ENCODE measurements at regions of chr21 and their contacts with region 1.

Region 1: DNA sequence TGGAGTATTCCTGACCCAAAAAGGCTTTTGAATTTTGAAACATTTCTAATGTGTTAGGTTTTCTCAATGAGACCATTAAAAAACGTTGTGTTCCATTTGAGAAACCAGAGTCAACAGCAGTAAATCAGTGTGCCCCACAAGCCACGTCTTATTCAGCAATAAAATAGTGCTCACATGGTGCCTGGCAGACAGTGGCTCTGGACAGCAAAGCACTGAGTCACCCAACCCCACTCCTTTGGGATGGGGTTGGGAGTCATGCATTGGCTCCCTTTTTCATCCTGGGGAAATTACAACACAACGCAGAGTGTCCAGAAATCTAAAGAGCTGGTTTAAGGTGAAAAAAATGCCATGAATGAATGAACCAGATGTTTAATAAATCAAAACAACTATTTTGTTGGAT is 46.5 kb downstream of the KCNJ15 start:
- DNase-seq: peak; percentile 90
- ATAC-seq: peak; percentile 98
- H3K4me3 ChIP-seq: no peak overlapping the region
- H3K27ac ChIP-seq: peak overlapping the region; percentile 55
- H3K4me1 ChIP-seq: peaks cover 14% of the 10 kb centered on the region
- H3K27me3 ChIP-seq: no peaks in the 10 kb centered on the region
- CTCF ChIP-seq: no peak

Region 2: GRCh38 chr21:38170280-38170679 is 133.0 kb before region 1 on chr21:
- CTCF ChIA-PET with region 1: no interaction called
- POLR2A ChIA-PET with region 1: no interaction called
- intact Hi-C with region 1: no loop called
- DNase-seq: peak; percentile 66
- ATAC-seq: no peak
- H3K4me3 ChIP-seq: no peak overlapping the region
- H3K27ac ChIP-seq: no peak overlapping the region
- H3K4me1 ChIP-seq: peaks cover 15% of the 10 kb centered on the region
- H3K27me3 ChIP-seq: 0 out of 2 replicates have a peak, but pooled peaks cover 3% of the 10 kb centered on the region
- CTCF ChIP-seq: peak; percentile 72

Region 3: DNA sequence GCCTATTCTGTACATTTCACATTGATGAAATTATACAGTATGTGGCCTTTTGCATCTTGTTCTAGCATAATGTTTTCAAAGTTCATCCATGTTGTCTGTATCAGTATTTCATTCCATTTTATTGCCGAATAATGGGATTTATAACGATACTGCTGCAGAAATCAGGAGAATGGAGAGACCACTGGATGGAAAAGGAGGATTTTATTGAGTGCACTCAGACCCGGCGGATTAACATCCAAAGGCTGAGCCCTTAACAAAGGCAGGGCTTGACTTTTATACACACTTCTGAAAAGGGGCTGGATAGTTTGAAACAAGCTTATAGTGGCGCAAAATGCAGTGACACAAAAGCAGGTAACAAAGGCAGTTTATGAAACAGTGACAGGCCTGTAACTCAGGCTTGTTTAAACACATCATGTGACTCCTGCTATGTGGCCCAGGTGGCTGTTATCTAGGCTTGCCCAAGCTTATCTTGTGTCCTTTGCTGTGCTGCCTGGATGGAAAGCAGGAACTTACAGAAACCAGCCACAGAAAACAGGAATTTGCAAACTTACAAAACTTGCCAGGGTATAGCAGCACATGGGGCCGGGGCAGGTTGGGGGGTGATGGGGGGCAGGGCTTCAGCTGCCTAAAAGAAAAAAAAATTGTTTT is 79.3 kb before region 1 on chr21:
- CTCF ChIA-PET with region 1: no interaction called
- POLR2A ChIA-PET with region 1: no interaction called
- intact Hi-C with region 1: no loop called
- DNase-seq: peak; percentile 22
- ATAC-seq: no peak
- H3K4me3 ChIP-seq: no peak overlapping the region
- H3K27ac ChIP-seq: no peak overlapping the region
- H3K4me1 ChIP-seq: no peaks in the 10 kb centered on the region
- H3K27me3 ChIP-seq: no peaks in the 10 kb centered on the region
- CTCF ChIP-seq: no peak

Region 4: GRCh38 chr21:38323721-38324531 is 20.6 kb after region 1 on chr21:
- CTCF ChIA-PET with region 1: no interaction called
- POLR2A ChIA-PET with region 1: no interaction called
- intact Hi-C with region 1: loop called (anchors 2 kb)
- DNase-seq: peak; percentile 95
- ATAC-seq: peak; percentile 87
- H3K4me3 ChIP-seq: peak overlapping the region; percentile 28; the same call in 1 of the 2 replicates
- H3K27ac ChIP-seq: peak overlapping the region; percentile 99
- H3K4me1 ChIP-seq: peaks cover 28% of the 10 kb centered on the region
- H3K27me3 ChIP-seq: no peaks in the 10 kb centered on the region
- CTCF ChIP-seq: no peak

Region 5: DNA sequence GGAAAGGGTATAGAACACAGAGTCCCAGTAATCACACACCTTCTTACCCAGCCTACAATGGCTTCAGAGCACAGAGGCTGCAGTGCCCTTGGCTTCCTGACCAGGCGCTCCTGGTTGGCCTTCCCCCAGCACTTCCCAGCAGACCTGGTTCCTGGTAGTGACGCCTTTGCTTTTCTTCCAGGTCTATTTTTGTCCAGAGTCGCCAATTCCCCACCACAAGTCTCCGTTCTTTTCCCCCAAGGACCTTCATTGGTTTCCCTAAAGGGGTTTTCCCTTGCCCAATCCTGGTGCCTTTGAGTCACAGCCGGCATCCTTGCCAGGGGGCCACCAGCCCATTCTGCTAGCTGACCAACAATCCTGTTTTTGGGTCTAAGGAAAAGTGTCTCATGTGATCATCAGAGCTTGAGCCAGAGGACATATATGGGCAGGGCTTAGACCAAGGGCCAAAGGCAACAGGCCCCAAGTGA is 38.3 kb after region 1 on chr21:
- CTCF ChIA-PET with region 1: no interaction called
- POLR2A ChIA-PET with region 1: no interaction called
- intact Hi-C with region 1: no loop called
- DNase-seq: no peak
- ATAC-seq: no peak
- H3K4me3 ChIP-seq: no peak overlapping the region
- H3K27ac ChIP-seq: no peak overlapping the region
- H3K4me1 ChIP-seq: peaks cover 20% of the 10 kb centered on the region
- H3K27me3 ChIP-seq: no peaks in the 10 kb centered on the region
- CTCF ChIP-seq: no peak